ENCODE measurements at regions of chr4 and their contacts with region 1.

Region 1: DNA sequence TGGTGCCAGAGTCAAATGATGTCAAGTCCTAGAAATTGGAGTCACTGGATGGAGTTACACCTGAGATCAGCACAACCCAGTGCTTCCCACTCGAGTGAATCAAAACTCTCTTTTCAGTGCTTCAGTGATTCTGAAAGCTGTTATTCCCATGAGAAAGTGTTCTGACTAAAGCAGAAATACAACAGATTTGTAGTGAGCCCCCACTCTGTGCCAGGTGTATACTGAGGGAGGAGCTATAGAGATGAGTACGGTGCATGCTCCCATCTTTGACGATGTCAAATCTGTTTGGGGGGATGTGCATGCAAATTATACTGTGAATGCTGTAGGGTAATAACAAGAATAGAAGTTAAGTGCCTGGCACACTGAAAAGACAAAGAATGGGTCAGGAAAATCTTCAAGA is 330.2 kb downstream of the HS3ST1 start:
- DNase-seq: peak; percentile 52
- H3K4me3 ChIP-seq: peak overlapping the region; percentile 2
- H3K27ac ChIP-seq: no peak overlapping the region
- H3K4me1 ChIP-seq: peaks cover 29% of the 10 kb centered on the region
- CTCF ChIP-seq: no peak

Region 2: DNA sequence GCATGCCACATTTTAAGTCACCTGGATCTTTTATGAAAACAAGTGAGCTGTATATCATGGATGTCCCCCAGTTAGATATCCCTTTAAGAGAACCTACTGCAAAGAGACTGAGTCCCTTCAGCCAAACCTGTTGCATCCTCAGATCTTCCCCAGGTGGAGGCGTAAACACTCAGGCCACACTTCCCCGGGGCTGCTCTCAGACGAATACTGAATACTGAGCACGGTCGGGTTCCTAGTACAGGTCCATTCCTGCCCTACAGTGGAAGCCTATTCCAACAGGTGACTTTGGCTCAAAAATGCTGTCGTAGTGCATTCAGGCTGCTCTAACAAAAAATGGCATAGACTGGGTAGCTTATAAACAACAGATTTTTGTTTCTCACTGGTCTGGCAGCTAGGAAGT is 93.6 kb before region 1 on chr4:
- CTCF ChIA-PET with region 1: no interaction called
- POLR2A ChIA-PET with region 1: interaction called, 3 read pairs
- intact Hi-C with region 1: loop called (anchors 5 kb)
- DNase-seq: no peak
- H3K4me3 ChIP-seq: no peak overlapping the region
- H3K27ac ChIP-seq: no peak overlapping the region
- H3K4me1 ChIP-seq: peaks cover 14% of the 10 kb centered on the region
- CTCF ChIP-seq: no peak